Activated CD4-positive, alpha-beta memory T cell treated with anti-CD3 and anti-CD28 coated beads for 36 hours (primary cell): ENCODE measurements at regions of chr13 and their contacts with region 1.

Region 1: GRCh38 chr13:75760131-75761021 is 124.2 kb downstream of the LMO7 start:
- DNase-seq: peak; percentile 15
- H3K4me3 Mint-ChIP-seq: peak overlapping the region; percentile 40
- H3K27ac Mint-ChIP-seq: no peak overlapping the region
- H3K4me1 Mint-ChIP-seq: peaks cover 62% of the 10 kb centered on the region
- H3K27me3 Mint-ChIP-seq: peaks cover 3% of the 10 kb centered on the region

Region 2: GRCh38 chr13:74246487-74246886 is 1513.9 kb before region 1 on chr13:
- CTCF ChIA-PET with region 1: no interaction called
- POLR2A ChIA-PET with region 1: no interaction called
- intact Hi-C with region 1: loop called (anchors 5 kb)
- DNase-seq: peak; percentile 47
- H3K4me3 Mint-ChIP-seq: peak overlapping the region; percentile 58
- H3K27ac Mint-ChIP-seq: peak overlapping the region; percentile 40
- H3K4me1 Mint-ChIP-seq: peaks cover 95% of the 10 kb centered on the region
- H3K27me3 Mint-ChIP-seq: no peaks in the 10 kb centered on the region

Region 3: GRCh38 chr13:75365724-75366173 is 394.6 kb before region 1 on chr13:
- CTCF ChIA-PET with region 1: no interaction called
- POLR2A ChIA-PET with region 1: no interaction called
- intact Hi-C with region 1: loop called (anchors 10 kb)
- DNase-seq: peak; percentile 36
- H3K4me3 Mint-ChIP-seq: peak overlapping the region; percentile 34
- H3K27ac Mint-ChIP-seq: peak overlapping the region; percentile 76
- H3K4me1 Mint-ChIP-seq: peaks cover 36% of the 10 kb centered on the region
- H3K27me3 Mint-ChIP-seq: peaks cover 3% of the 10 kb centered on the region

Region 4: DNA sequence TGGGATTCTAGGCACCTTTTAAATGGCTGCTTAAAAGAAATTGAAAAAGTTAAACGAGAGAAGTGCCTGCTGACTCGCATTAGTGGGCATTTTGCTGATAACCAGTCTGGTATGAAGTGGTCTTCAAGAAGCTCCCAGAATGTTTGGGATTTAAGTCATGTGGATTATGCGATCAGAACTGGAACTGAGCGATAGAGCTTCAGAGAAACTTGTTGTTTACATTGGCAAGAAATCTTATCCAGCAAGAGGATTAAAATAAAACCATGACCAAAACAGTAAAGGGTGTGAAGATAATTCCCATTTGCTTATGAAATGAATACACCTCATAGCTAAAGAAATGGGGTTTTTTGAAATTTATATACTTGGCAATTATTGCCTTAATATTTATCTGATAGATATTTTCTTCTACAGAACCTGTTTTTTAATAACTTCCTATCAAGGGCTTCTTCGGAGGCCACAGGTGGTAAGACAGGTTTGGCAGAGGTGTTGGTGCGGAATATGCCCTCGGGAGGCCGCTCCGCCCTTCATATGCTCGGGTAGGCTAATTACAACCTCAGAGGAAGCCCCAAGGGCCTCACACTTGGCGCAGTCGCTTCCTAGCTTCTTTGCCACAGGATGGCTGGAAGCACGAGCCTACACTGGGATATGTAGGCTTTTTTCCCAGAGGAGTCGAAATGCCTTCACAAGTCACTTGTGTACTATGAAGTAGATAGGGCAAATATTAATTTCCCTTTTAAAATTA is 55.6 kb before region 1 on chr13:
- CTCF ChIA-PET with region 1: no interaction called
- POLR2A ChIA-PET with region 1: interaction called, 4 read pairs
- intact Hi-C with region 1: loop called (anchors 1 kb)
- DNase-seq: no peak
- H3K4me3 Mint-ChIP-seq: no peak overlapping the region
- H3K27ac Mint-ChIP-seq: no peak overlapping the region
- H3K4me1 Mint-ChIP-seq: peaks cover 8% of the 10 kb centered on the region
- H3K27me3 Mint-ChIP-seq: no peaks in the 10 kb centered on the region

Region 5: DNA sequence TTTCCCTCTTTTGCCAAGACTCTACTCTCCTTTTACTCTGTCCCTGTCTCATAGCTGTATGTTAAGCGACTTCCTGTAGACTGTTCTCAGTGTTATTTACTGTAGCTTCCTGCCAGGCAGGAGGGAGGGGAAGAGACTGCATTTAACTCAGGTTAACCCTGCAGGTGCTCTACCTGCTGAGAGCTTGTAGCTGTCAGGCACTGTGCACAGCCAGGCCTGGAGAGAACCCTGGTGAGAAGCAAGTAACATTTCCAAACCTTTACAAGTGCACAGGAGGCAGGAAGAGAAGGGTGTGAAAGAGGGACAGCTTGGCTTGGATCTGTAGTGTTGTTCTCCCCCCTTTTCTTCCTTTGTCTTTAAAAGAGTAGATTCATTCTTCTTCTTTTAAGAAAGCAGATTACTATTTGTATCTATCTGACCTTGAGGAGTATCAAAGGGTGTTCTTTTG is 42.8 kb after region 1 on chr13:
- CTCF ChIA-PET with region 1: interaction called, 11 read pairs
- POLR2A ChIA-PET with region 1: interaction called, 4 read pairs
- intact Hi-C with region 1: loop called (anchors 1 kb)
- DNase-seq: no peak
- H3K4me3 Mint-ChIP-seq: no peak overlapping the region
- H3K27ac Mint-ChIP-seq: no peak overlapping the region
- H3K4me1 Mint-ChIP-seq: peaks cover 42% of the 10 kb centered on the region
- H3K27me3 Mint-ChIP-seq: no peaks in the 10 kb centered on the region